ENCODE measurements at regions of chr2 and their contacts with region 1.

Region 1: DNA sequence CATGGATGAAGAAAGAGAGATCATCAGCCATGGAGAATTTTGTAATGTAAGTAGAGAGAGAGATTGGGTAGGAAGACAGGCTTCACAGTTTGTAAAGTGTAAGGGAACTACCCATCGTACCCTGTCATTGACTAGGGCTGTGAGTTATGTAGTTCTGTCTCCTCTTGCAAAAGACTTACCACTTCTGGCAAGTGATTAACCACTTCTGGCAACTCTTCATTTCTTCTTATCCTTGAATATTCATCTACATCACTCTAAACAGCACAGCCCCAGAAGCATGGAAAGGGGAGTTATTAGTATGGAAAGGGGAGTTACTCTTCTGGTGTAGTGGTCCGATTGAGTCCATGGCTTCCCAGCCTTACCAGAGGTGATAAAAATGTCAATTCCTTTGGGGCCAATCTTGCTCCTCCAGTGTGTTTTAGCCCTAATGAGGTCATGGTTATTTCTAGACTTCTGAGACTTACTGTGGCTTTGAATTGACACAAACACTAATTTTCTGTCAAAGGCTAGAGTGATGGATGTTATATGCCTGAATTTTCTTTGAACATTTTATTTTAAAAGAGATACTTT is 52.0 kb downstream of the STAT1 start:
- DNase-seq: peak; percentile 57
- H3K4me3 Mint-ChIP-seq: no peak overlapping the region
- H3K27ac Mint-ChIP-seq: peak overlapping the region; percentile 3
- H3K4me1 Mint-ChIP-seq: peaks cover 17% of the 10 kb centered on the region
- H3K27me3 Mint-ChIP-seq: no peaks in the 10 kb centered on the region

Region 2: DNA sequence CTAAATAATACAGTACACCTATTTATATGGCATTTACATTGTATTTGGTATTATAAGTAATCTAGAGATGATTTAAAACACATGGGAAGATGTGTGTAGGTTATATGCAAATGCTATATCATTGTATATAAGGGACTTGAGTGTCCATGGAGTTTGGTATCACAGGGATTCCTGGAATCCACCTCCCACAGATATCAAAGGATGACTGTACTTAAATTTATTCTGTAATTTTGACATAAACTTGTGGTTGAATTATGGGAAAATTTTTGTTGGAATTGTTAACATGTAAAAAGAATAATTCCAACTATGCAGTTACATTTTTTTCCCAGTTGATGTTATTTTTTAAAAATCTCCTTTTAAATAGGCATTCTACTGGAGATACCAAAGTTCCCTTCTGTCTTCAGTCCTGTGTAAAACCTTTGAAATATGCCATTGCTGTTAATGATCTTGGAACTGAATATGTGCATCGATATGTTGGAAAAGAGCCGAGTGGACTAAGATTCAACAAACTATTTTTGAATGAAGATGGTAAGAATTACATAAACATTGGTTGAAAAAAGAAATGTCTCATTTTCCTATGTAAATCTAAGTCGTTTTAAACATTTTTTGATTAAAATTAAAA is 57.3 kb before region 1 on chr2:
- intact Hi-C with region 1: loop called (anchors 5 kb)
- DNase-seq: no peak
- H3K4me3 Mint-ChIP-seq: no peak overlapping the region
- H3K27ac Mint-ChIP-seq: peak overlapping the region; percentile 62
- H3K4me1 Mint-ChIP-seq: peaks cover 11% of the 10 kb centered on the region
- H3K27me3 Mint-ChIP-seq: no peaks in the 10 kb centered on the region

Region 3: GRCh38 chr2:190979906-190980629 is 18.1 kb after region 1 on chr2:
- intact Hi-C with region 1: loop called (anchors 2 kb)
- DNase-seq: no peak
- H3K4me3 Mint-ChIP-seq: no peak overlapping the region
- H3K27ac Mint-ChIP-seq: peak overlapping the region; percentile 90
- H3K4me1 Mint-ChIP-seq: peaks cover 56% of the 10 kb centered on the region
- H3K27me3 Mint-ChIP-seq: no peaks in the 10 kb centered on the region

Region 4: DNA sequence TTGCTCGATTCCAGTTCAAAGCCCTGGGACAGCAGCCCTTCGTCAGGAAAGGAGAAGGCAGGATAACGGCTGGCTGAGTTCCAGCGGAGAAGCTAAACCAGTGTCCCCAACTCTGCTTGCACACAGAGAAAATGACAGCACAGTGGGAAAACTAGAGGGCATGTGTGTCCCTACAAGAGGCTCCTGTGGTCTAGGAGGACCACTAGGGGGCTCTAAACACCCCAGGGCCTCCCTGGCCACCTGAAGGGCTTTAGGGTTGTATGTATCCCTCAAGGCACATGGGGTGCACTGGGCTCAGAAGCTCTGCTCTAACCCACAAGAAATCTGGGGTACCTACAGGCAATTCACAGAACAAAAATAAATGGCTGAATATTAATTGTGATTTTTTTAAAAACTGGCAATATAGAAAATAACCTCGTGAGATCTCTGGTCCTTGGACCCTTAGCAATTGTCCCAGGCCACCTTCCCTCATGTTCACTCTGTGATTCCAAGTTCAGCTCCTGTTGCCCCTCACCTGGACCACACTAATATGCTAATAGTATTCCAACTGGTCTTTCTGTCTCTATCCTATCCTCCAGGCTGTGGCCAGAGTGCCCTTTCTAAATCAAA is 34.4 kb after region 1 on chr2:
- intact Hi-C with region 1: loop called (anchors 5 kb)
- DNase-seq: peak; percentile 73
- H3K4me3 Mint-ChIP-seq: peak overlapping the region; percentile 45
- H3K27ac Mint-ChIP-seq: peak overlapping the region; percentile 77
- H3K4me1 Mint-ChIP-seq: peaks cover 78% of the 10 kb centered on the region
- H3K27me3 Mint-ChIP-seq: no peaks in the 10 kb centered on the region

Measured in activated CD4-positive, alpha-beta T cell treated with anti-CD3 and anti-CD28 coated beads, Interleukin-2, amount 10 ng/mL, durations not matched to agents 24 days and 14 days (primary cell).